ENCODE measurements at regions of chrX and their contacts with region 1.

Region 1: DNA sequence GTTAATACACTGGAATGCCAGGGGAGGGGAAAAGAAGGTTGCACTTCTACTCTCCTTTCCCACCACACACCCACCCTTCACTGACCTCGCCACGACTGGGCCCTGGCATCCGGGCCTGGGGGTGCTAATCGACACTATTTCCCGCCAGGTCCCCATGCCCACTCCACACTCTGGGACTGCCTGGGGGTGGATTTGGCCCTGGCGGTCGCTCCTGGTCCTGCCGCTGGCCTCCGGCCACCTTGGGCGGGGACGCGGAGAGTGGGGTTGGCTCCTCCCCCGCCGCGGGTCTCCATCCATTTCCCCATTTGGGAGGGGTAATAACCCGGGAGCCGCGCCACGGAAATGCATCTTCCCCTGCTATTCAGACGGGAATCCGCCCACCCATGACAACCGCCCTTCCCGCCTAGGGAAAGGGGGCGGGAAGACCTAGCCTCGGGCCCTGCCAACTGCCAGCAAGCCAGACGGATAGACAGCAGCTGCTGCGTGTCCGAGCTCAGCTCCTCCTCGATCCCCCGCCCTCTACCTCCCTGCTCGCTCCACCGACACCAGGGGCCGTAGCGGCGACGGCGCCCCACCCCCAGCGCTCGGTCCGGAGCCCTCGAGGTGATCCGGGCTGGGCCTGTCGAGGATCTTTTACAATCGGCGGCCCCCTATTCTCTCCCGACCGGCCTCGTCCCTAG is 78.1 kb downstream of the RLIM start:
- DNase-seq: no peak
- H3K4me3 ChIP-seq: no peak overlapping the region
- H3K4me1 ChIP-seq: peaks cover 15% of the 10 kb centered on the region
- H3K27me3 ChIP-seq: no peaks in the 10 kb centered on the region

Region 2: GRCh38 chrX:74382613-74383012 is 153.7 kb before region 1 on chrX:
- in situ Hi-C with region 1: loop called (anchors 10 kb)
- DNase-seq: peak; percentile 67 to 86
- H3K4me3 ChIP-seq: no peak overlapping the region
- H3K4me1 ChIP-seq: no peaks in the 10 kb centered on the region
- H3K27me3 ChIP-seq: no peaks in the 10 kb centered on the region

Region 3: DNA sequence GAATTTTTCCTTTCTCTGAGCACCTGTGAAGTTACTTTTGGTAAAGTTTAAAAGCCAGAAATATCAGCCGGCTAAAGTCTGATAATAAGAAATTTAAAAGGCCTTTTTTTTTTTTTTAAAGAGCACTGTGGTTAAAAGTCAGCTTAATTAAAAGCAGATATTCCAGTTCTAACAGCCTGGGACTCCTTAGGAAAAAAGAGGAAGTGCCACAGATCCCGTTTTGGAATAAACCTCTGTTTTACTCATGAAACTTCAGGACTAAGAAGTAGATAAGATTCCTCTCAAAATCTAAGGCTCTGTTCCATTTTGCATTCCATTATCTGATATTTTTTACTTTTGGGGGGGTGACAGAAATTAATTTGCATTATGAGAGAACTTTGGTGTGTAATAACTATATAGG is 582.0 kb after region 1 on chrX:
- in situ Hi-C with region 1: no loop called
- DNase-seq: no peak
- H3K4me3 ChIP-seq: no peak overlapping the region
- H3K4me1 ChIP-seq: peaks cover 28% of the 10 kb centered on the region
- H3K27me3 ChIP-seq: no peaks in the 10 kb centered on the region